Activated B cell treated with CpG ODN at 0.5 μM for 24 hours (primary cell): ENCODE measurements at regions of chr4 and their contacts with region 1.

Region 1: GRCh38 chr4:73653695-73654106 is 33.5 kb upstream of the RASSF6 start:
- DNase-seq: no peak
- ATAC-seq: peak; percentile 47
- H3K4me3 Mint-ChIP-seq: no peak overlapping the region
- H3K27ac Mint-ChIP-seq: no peak overlapping the region
- H3K4me1 Mint-ChIP-seq: no peaks in the 10 kb centered on the region
- H3K27me3 Mint-ChIP-seq: no peaks in the 10 kb centered on the region
- CTCF ChIP-seq: peak; percentile 52

Region 2: DNA sequence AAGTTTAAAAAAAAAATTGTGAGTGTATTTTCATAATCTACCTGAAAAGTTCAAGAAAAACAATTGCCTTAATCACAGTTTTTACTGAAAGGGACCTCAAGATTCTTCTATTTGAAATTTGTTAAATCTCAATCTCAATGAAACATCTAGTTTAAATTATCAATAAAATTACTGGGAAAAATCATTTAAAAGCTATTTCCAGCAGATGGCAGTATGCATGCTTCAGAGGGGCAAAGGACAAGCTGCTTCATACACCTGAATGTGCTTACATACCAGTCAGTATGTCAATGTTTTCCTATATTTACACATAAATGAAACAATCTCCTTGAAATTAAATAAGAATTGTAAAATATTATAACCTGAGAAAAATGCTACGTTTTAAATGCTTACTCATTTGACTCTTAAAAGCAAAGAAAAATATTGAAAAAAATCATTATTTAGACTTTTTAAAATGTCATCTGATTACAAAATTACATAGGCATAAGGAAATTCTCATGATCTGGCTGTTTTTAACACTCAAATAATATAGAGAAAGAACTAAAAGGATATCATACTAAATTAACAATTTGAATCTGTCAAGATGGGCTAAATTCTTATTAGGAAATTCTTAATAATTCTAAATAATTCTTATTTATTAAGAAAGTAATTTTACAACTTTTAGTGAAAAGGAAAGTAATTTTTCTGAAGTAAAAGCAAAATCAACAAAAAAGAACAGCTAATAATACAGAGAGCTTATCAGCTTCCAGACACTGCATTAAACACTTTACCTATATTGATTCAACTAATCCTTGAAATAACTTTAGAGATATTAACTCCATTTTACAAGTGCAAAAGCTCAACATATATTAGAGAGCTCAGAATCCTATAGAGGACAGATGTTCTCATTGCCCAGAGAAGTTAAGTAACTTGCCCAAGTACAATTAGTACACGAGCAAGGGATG is 1326.7 kb before region 1 on chr4:
- CTCF ChIA-PET with region 1: no interaction called
- POLR2A ChIA-PET with region 1: no interaction called
- intact Hi-C with region 1: loop called (anchors 10 kb)
- DNase-seq: no peak
- ATAC-seq: no peak
- H3K4me3 Mint-ChIP-seq: no peak overlapping the region
- H3K27ac Mint-ChIP-seq: no peak overlapping the region
- H3K4me1 Mint-ChIP-seq: no peaks in the 10 kb centered on the region
- H3K27me3 Mint-ChIP-seq: peaks cover 8% of the 10 kb centered on the region
- CTCF ChIP-seq: no peak

Region 3: DNA sequence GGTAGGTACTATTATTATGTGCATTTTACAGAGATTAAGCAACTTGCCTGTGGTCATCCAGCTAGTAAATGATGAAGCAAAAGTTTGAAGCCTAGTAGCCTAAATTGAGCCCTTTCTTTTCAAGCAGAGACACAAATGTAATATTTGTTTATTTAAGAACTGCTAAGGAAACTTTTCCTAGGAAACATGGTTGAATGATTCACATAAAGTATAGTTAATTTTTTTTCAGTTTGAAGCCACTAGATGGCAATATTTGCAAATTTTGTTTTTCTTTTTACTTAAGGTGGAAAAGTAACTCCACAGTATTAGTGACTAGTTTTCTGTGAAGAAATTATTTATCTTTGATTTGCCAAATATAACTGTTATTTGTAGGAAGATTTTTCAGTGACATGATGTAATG is 342.3 kb before region 1 on chr4:
- CTCF ChIA-PET with region 1: interaction called, 9 read pairs
- POLR2A ChIA-PET with region 1: no interaction called
- intact Hi-C with region 1: loop called (anchors 1 kb)
- DNase-seq: no peak
- ATAC-seq: no peak
- H3K4me3 Mint-ChIP-seq: no peak overlapping the region
- H3K27ac Mint-ChIP-seq: no peak overlapping the region
- H3K4me1 Mint-ChIP-seq: no peaks in the 10 kb centered on the region
- H3K27me3 Mint-ChIP-seq: no peaks in the 10 kb centered on the region
- CTCF ChIP-seq: no peak

Region 4: GRCh38 chr4:73573794-73574406 is 79.8 kb before region 1 on chr4:
- CTCF ChIA-PET with region 1: interaction called, 100 read pairs
- POLR2A ChIA-PET with region 1: no interaction called
- intact Hi-C with region 1: loop called (anchors 1 kb)
- DNase-seq: peak; percentile 17
- ATAC-seq: peak; percentile 66
- H3K4me3 Mint-ChIP-seq: no peak overlapping the region
- H3K27ac Mint-ChIP-seq: no peak overlapping the region
- H3K4me1 Mint-ChIP-seq: no peaks in the 10 kb centered on the region
- H3K27me3 Mint-ChIP-seq: peaks cover 3% of the 10 kb centered on the region
- CTCF ChIP-seq: no peak